MCF 10A (cell line): ENCODE measurements at regions of chr7 and their contacts with region 1.

Region 1: GRCh38 chr7:38673795-38674194 is 42.6 kb upstream of the AMPH start:
- DNase-seq: peak; percentile 99
- H3K4me3 Mint-ChIP-seq: no peak overlapping the region
- H3K27ac Mint-ChIP-seq: peak overlapping the region; percentile 76
- H3K4me1 Mint-ChIP-seq: peaks cover 27% of the 10 kb centered on the region
- H3K27me3 Mint-ChIP-seq: no peaks in the 10 kb centered on the region
- CTCF ChIP-seq: no peak

Region 2: GRCh38 chr7:38748056-38748611 is 74.3 kb after region 1 on chr7:
- CTCF ChIA-PET with region 1: no interaction called
- POLR2A ChIA-PET with region 1: no interaction called
- intact Hi-C with region 1: loop called (anchors 5 kb)
- DNase-seq: peak; percentile 31
- H3K4me3 Mint-ChIP-seq: no peak overlapping the region
- H3K27ac Mint-ChIP-seq: no peak overlapping the region
- H3K4me1 Mint-ChIP-seq: peaks cover 19% of the 10 kb centered on the region
- H3K27me3 Mint-ChIP-seq: no peaks in the 10 kb centered on the region
- CTCF ChIP-seq: peak; percentile 17

Region 3: DNA sequence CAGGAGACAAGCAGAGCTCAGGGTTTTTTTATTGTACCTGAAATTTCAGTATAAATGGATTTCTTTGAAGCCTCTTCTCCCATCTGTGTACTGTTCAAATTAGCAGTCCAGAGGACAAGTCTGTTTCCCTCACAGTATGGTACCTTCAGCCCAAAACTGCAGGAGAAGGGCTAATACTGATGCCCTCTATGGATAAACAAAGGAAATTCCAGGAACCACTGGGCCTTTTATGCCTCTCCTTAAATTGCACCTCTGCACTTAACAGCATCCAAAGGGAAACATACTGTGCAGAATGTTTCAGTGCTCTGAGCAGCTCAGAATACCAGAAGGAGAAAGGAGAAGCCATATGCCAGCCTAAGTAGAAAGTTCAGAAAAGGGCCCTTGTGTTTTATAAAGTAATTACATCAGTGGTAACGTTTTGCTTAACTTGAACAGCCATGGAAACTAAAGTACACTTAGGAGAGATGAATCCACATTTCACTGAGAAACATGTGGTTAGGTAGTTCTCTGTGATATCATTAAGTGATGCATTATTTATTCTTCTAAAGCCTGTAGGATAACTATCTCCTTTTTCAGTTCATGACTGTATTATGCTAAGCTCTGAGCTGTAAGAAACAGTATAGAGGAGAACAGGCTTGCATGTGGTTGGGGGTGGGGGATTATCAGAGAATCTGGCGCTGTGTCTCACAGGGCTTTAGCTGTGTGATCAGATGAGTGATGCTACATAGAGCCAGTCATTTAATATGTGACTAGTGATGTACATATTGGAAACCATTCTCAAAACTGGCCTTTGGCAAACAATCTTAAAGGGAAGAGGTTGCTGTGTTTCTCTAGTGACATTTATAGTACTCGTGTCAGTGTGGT is 415.2 kb after region 1 on chr7:
- CTCF ChIA-PET with region 1: no interaction called
- POLR2A ChIA-PET with region 1: no interaction called
- intact Hi-C with region 1: no loop called
- DNase-seq: no peak
- H3K4me3 Mint-ChIP-seq: no peak overlapping the region
- H3K27ac Mint-ChIP-seq: no peak overlapping the region
- H3K4me1 Mint-ChIP-seq: no peaks in the 10 kb centered on the region
- H3K27me3 Mint-ChIP-seq: peaks cover 84% of the 10 kb centered on the region
- CTCF ChIP-seq: no peak